AG04450 (cell line): ENCODE measurements at regions of chr22 and their contacts with region 1.

Region 1: GRCh38 chr22:42844756-42845155 is 12.3 kb downstream of the ARFGAP3 start:
- DNase-seq: no peak
- H3K4me3 ChIP-seq: no peak overlapping the region
- H3K27ac ChIP-seq: no peak overlapping the region
- H3K27me3 ChIP-seq: no peaks in the 10 kb centered on the region
- CTCF ChIP-seq: no peak

Region 2: GRCh38 chr22:42717197-42717928 is 127.4 kb before region 1 on chr22:
- CTCF ChIA-PET with region 1: no interaction called
- POLR2A ChIA-PET with region 1: no interaction called
- DNase-seq: no peak
- H3K4me3 ChIP-seq: no peak overlapping the region
- H3K27ac ChIP-seq: no peak overlapping the region
- H3K27me3 ChIP-seq: peaks cover 6% of the 10 kb centered on the region
- CTCF ChIP-seq: no peak

Region 3: GRCh38 chr22:42856865-42857704 is 12.3 kb after region 1 on chr22 and contains the start of gene ARFGAP3:
- CTCF ChIA-PET with region 1: no interaction called
- POLR2A ChIA-PET with region 1: interaction called, 14 read pairs
- DNase-seq: peak; percentile 76
- H3K4me3 ChIP-seq: peak within 1 kb of the TSS; percentile 93
- H3K27ac ChIP-seq: peak within 1 kb of the TSS; percentile 91
- H3K27me3 ChIP-seq: no peaks in the 10 kb centered on the region
- CTCF ChIP-seq: no peak
- polyA plus RNA-seq, gene ARFGAP3: 54.2 and 69.4 TPM in 2 replicates